Sigmoid colon (tissue), 7 donors: ENCODE measurements at regions of chr4 and their contacts with region 1.

Region 1: DNA sequence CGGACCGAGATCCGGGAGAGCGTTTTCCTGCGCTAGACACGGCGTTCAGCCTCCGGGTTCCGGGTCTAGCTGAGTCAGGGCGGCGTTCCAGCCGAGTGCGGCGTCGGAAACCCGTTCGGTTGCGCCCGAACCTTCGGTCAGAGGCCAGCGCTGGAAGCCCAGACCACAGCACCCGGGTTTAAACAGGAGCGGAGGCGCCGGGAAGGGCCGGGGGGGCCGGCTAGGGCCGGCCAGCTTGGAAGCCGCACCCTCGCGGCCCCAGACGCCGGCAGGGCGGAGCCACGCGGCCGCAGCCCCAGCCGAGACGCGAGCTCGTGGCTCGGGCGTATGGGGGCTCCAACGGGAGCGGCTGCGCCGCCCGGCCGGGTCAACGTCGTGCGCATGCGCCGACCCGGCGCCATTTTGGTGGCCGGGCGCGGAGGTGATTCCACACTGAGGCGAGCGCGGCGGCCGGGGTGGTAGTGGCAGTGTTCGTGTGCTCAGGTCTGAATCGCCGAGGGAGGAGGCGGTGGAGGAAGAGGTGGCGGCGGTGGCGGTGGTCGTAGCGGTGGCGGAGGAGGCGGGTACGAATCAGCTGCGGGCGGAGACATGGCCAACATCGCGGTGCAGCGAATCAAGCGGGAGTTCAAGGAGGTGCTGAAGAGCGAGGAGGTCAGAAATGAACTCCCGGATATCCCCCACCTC is at the start of gene UBE2K:
- DNase-seq: peak; percentile 94
- H3K4me3 ChIP-seq: peak within 1 kb of the TSS; percentile 86 to 97 (median 88)
- H3K27ac ChIP-seq: peak within 1 kb of the TSS; percentile 93 to 96 (median 94)
- H3K4me1 ChIP-seq: peaks cover 0 to 50% (median 32%) of the 10 kb centered on the region in 4 donors
- H3K27me3 ChIP-seq: no peaks in the 10 kb centered on the region
- CTCF ChIP-seq: no peak
- EP300 ChIP-seq: no peak
- POLR2A ChIP-seq: peak; percentile 60 to 76
- total RNA-seq, gene UBE2K: 25.2 to 37.8 (median 31.4) TPM

Region 2: GRCh38 chr4:39458505-39459300 is 239.2 kb before region 1 on chr4 and contains the starts of genes LIAS and RPL9:
- intact Hi-C with region 1: loop called (anchors 5 kb)
- DNase-seq: peak; percentile 99
- H3K4me3 ChIP-seq: peak within 1 kb of the TSS; percentile 70 to 79 (median 74)
- H3K27ac ChIP-seq: peak within 1 kb of the TSS; percentile 97 to 98 (median 98)
- H3K4me1 ChIP-seq: peaks cover 0 to 40% (median 36%) of the 10 kb centered on the region in 4 donors
- H3K27me3 ChIP-seq: no peaks in the 10 kb centered on the region
- CTCF ChIP-seq: no peak
- EP300 ChIP-seq: peak in 2 of 4 donors; percentile 46 to 83
- POLR2A ChIP-seq: peak; percentile 93 to 96
- total RNA-seq, gene LIAS: 16.1 to 24.8 (median 18.8) TPM
- total RNA-seq, gene RPL9: 4,848 to 14,511 (median 7,301) TPM

Region 3: GRCh38 chr4:39527273-39528060 is 170.4 kb before region 1 on chr4 and contains the start of gene UGDH:
- intact Hi-C with region 1: loop called (anchors 2 kb)
- DNase-seq: peak; percentile 98
- H3K4me3 ChIP-seq: peak within 1 kb of the TSS; percentile 70 to 92 (median 90)
- H3K27ac ChIP-seq: peak within 1 kb of the TSS; percentile 89 to 98 (median 97)
- H3K4me1 ChIP-seq: peaks cover 0 to 28% (median 21%) of the 10 kb centered on the region in 4 donors
- H3K27me3 ChIP-seq: no peaks in the 10 kb centered on the region
- CTCF ChIP-seq: no peak
- EP300 ChIP-seq: peak in 1 of 4 donors; percentile 9
- POLR2A ChIP-seq: peak; percentile 79 to 92
- total RNA-seq, gene UGDH: 33.4 to 51.2 (median 43.0) TPM

Region 4: GRCh38 chr4:39823191-39823590 is 125.3 kb after region 1 on chr4:
- intact Hi-C with region 1: loop called (anchors 10 kb)
- DNase-seq: no peak
- H3K4me3 ChIP-seq: no peak overlapping the region
- H3K27ac ChIP-seq: no peak overlapping the region
- H3K4me1 ChIP-seq: no peaks in the 10 kb centered on the region
- H3K27me3 ChIP-seq: no peaks in the 10 kb centered on the region
- CTCF ChIP-seq: no peak
- EP300 ChIP-seq: no peak
- POLR2A ChIP-seq: no peak

Region 5: DNA sequence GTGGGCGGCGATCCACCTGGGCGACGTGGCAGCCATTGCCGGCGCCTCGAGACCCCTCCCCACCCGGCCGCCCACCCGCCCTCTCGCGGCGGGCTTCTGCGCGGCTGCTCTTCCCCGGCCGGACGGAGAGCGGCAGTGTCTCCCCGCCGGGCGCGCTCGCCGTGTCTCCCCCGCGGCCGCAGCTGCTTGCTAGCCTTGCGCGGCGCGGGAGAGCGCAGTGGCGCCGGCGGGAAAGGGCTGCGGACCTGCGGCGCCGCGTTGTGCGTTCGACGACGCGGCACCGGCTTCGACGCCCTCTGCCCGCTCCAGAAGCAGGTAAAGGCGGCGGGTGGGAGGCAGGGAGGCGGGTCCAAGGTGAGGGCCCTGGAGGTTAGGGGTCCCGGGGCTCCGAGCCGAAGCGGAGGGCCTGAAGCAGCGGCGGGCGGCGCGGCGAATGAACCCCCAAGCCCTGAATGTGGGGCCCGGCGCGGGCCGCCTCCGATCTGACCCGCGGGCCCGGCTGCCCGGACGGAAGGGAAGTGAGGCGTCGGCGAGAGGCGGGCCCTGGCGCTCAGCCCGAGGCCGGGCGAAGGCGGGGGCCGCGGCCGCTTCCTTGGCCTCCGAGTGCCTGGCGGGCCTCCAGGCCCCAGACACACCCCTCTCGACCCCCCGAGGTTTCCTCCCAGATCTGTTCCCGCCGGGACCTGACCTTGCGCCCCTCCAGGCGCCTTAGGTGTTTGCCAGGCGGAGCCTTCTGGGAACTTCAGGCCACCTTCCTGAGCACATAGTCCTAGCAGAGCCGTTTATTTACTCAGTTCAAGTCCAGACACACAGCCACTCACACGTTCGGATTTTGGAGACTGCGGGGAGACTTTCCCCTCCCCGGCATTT is 359.1 kb after region 1 on chr4 and contains the start of gene N4BP2:
- intact Hi-C with region 1: loop called (anchors 2 kb)
- DNase-seq: peak; percentile 89
- H3K4me3 ChIP-seq: peak within 1 kb of the TSS; percentile 76 to 88 (median 86)
- H3K27ac ChIP-seq: peak within 1 kb of the TSS; percentile 98 to 100 (median 100)
- H3K4me1 ChIP-seq: peaks cover 0 to 27% (median 21%) of the 10 kb centered on the region in 4 donors
- H3K27me3 ChIP-seq: no peaks in the 10 kb centered on the region
- CTCF ChIP-seq: peak in 3 of 4 experiments; percentile 21 to 72 (median 25)
- EP300 ChIP-seq: no peak
- POLR2A ChIP-seq: peak; percentile 70 to 73
- total RNA-seq, gene N4BP2: 7.9 to 11.9 (median 9.2) TPM

Region 6: DNA sequence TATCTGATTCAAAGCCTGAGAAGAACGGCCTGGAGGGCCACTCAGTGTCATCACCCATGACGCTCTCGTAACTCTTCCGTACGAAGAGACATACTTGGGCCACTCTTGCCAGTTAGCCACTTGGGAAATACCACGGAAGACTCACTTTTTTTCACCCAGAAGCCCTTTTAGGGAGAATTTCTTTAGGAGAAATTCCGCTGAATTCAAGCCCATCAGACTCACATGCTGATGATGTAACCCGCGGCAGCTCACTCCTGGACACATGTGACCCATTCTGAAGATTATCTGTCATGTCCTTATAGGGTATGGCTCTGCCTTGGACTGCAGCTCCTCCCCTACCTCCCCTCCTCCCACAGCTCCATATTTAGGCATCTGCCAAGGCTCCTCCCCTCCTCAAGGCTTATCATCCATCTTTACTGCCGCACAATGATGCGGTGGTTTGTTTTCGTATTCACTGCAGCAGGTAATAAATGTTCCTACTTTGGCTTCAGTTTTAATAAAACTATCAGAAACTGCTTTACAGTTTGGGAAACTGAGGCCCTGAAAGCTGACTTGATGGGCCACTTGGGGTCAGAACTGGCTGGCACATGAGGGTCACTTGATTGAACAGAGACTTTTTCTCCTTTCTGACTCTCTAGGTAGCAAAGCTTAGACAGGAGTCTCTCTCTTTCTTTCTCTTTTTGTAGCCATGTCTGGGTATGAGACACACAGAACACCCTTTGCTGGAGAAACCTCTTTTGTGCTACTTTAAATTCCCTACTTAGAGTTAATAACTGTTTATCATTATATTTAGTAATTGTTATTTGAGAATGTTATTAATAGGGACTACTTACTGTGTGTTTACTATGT is 541.0 kb after region 1 on chr4:
- intact Hi-C with region 1: no loop called
- DNase-seq: no peak
- H3K4me3 ChIP-seq: no peak overlapping the region
- H3K27ac ChIP-seq: no peak overlapping the region
- H3K4me1 ChIP-seq: no peaks in the 10 kb centered on the region
- H3K27me3 ChIP-seq: no peaks in the 10 kb centered on the region
- CTCF ChIP-seq: no peak
- EP300 ChIP-seq: no peak
- POLR2A ChIP-seq: no peak